ENCODE measurements at regions of chr7 and their contacts with region 1.

Region 1: GRCh38 chr7:92150450-92151017 is 16.3 kb upstream of the CYP51A1 start:
- DNase-seq: no peak
- ATAC-seq: no peak
- H3K4me3 ChIP-seq: no peak overlapping the region
- H3K27ac ChIP-seq: no peak overlapping the region
- H3K4me1 ChIP-seq: no peaks in the 10 kb centered on the region
- H3K27me3 ChIP-seq: no peaks in the 10 kb centered on the region; the same call in 1 of the 2 replicates
- CTCF ChIP-seq: no peak

Region 2: DNA sequence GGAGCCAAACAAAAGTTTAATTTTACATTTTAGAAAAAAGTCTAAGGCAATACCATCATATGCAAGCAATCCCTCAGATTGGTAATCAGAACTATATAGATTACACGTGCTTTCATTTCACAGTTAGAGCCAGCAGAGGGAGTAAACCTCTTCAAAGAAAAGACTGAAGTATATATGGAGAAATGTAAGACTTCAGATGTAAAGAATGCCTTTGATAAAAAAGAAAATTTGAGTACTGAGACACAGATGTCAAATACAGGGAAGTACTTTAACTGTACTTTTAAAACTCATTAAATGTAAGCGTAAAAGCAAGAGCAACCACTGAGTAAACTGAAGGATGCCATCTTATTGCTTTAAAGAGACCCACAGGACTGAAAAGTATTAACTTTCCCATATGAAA is 541.0 kb after region 1 on chr7:
- CTCF ChIA-PET with region 1: interaction called, 10 read pairs
- POLR2A ChIA-PET with region 1: no interaction called
- in situ Hi-C with region 1: no loop called
- intact Hi-C with region 1: no loop called
- DNase-seq: peak; percentile 61
- ATAC-seq: peak; percentile 62
- H3K4me3 ChIP-seq: no peak overlapping the region
- H3K27ac ChIP-seq: peak overlapping the region; percentile 65
- H3K4me1 ChIP-seq: peaks cover 22% of the 10 kb centered on the region
- H3K27me3 ChIP-seq: no peaks in the 10 kb centered on the region
- CTCF ChIP-seq: peak; percentile 66; the same call in 1 of the 2 replicates

Measured in Panc1 (cell line).